ENCODE measurements at regions of chr5 and their contacts with region 1.

Region 1: GRCh38 chr5:157354800-157355199 is 88.9 kb downstream of the CYFIP2 start:
- DNase-seq: no peak
- H3K4me3 Mint-ChIP-seq: no peak overlapping the region
- H3K27ac Mint-ChIP-seq: no peak overlapping the region
- H3K4me1 Mint-ChIP-seq: peaks cover 53% of the 10 kb centered on the region
- H3K27me3 Mint-ChIP-seq: no peaks in the 10 kb centered on the region

Region 2: DNA sequence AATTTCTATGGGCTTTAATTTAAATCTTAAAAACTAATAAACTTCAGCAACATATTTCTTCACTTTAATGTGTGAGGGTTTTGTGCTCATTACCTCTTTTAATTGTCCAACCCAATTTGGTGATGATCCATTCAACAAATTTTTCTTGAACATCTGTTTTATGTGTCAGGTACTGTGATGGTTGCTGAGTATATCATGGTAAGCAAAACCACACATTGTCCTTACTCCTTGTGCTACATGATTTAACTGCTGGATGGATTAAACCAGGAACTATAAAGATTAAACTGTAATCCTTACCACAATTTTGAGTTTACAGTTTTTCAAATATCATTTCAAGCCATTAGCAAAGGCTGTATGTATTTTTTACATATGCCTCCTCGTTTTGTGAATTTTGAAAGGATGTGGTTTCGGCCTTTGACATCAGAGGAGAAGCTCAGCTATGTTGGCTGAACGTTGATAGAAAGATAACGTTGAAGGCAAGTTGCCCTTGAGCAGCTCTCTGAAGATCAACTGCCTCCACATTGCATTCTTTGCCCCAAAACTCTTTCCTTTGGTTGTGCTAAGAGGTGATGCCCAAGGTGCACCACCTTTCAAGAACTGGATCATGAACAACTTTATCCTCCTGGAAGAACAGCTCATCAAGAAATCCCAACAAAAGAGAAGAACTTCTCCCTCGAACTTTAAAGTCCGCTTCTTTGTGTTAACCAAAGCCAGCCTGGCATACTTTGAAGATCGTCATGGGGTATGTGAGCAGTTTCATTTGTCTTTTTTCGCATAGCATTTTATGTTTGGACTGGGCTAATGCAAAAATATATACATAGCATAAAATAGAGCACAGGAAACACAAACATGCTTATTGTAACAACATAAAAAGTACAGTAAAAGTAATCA is 174.2 kb before region 1 on chr5 and contains the start of gene ITK:
- CTCF ChIA-PET with region 1: no interaction called
- POLR2A ChIA-PET with region 1: no interaction called
- intact Hi-C with region 1: loop called (anchors 5 kb)
- DNase-seq: peak; percentile 58
- H3K4me3 Mint-ChIP-seq: peak within 1 kb of the TSS; percentile 99
- H3K27ac Mint-ChIP-seq: peak within 1 kb of the TSS; percentile 100
- H3K4me1 Mint-ChIP-seq: peaks cover 45% of the 10 kb centered on the region
- H3K27me3 Mint-ChIP-seq: no peaks in the 10 kb centered on the region
- total RNA-seq, gene ITK: 236 to 240 TPM

Region 3: GRCh38 chr5:157328277-157328912 is 26.4 kb before region 1 on chr5:
- CTCF ChIA-PET with region 1: interaction called, 12 read pairs
- POLR2A ChIA-PET with region 1: no interaction called
- intact Hi-C with region 1: no loop called
- DNase-seq: peak; percentile 71
- H3K4me3 Mint-ChIP-seq: no peak overlapping the region
- H3K27ac Mint-ChIP-seq: peak overlapping the region; percentile 23
- H3K4me1 Mint-ChIP-seq: peaks cover 40% of the 10 kb centered on the region
- H3K27me3 Mint-ChIP-seq: no peaks in the 10 kb centered on the region

Region 4: DNA sequence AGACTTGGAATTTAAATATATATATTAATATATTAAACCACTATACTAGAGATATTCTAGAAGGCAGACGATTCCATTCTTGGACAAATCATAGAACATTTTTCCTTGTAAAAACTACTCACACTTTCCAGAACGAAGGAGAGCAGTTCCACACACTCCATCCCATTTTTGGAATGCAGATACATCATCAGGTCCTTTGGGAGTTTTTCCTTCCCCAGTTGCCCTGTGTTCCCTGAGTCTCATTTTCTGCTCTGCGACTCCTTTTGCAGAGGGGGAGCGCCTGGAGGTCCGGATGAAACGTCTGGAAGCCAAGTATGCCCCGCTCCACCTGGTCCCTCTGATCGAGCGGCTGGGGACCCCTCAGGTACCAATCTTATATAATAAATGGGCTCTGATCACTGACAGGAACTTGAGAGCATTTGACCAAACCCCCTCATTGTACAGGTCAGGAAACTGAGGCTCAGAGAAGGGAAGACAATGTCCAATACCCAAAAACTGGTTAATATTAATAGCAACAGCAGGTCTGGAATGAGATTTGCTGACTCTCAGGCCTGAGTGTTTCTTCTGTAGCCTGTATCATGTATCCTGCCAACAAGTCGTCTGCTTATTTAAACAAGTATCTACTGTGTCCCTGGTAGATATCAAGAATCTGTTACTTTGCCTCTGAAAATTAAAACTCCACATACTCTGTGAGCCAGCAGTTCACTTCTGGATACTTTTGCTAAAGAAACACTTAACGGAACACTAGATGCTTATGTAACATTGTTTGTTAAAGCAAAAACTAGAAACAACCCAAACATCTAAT is 28.4 kb after region 1 on chr5:
- CTCF ChIA-PET with region 1: no interaction called
- POLR2A ChIA-PET with region 1: no interaction called
- intact Hi-C with region 1: no loop called
- DNase-seq: no peak
- H3K4me3 Mint-ChIP-seq: no peak overlapping the region
- H3K27ac Mint-ChIP-seq: no peak overlapping the region
- H3K4me1 Mint-ChIP-seq: peaks cover 13% of the 10 kb centered on the region
- H3K27me3 Mint-ChIP-seq: no peaks in the 10 kb centered on the region

Region 5: DNA sequence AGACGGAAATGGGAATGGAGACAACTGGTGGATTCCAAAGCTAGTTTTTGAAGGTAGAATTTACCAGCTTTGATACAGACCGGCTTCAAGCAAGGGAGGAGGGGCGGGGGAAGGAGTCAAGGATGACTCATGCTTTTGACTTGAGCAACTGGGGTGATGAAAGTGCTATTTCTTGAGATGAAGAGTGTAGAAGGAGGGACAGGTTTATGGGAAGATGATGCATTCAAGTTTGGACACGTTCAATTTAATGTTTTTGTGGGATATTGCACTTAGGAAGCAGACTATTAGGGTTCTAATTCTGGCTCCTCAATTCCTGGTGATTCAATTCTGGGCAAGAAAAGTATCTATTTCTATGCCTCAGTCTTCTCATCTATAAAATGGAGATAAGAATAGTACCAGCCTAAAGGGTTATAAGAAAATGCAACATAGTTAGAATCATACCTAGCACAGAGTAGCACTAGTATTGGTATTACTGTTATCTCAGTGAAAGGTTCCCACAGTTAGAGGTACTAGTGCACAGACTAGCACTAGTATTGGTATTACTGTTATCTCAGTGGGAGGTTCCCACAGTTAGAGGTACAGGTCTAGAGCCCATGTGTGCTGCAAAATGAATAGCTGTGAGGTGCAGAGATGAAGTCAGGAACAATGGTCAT is 109.8 kb after region 1 on chr5:
- CTCF ChIA-PET with region 1: interaction called, 8 read pairs
- POLR2A ChIA-PET with region 1: interaction called, 4 read pairs
- intact Hi-C with region 1: loop called (anchors 1 kb)
- DNase-seq: peak; percentile 86
- H3K4me3 Mint-ChIP-seq: peak overlapping the region; percentile 2
- H3K27ac Mint-ChIP-seq: peak overlapping the region; percentile 90
- H3K4me1 Mint-ChIP-seq: peaks cover 34% of the 10 kb centered on the region
- H3K27me3 Mint-ChIP-seq: peaks cover 15% of the 10 kb centered on the region

Region 6: DNA sequence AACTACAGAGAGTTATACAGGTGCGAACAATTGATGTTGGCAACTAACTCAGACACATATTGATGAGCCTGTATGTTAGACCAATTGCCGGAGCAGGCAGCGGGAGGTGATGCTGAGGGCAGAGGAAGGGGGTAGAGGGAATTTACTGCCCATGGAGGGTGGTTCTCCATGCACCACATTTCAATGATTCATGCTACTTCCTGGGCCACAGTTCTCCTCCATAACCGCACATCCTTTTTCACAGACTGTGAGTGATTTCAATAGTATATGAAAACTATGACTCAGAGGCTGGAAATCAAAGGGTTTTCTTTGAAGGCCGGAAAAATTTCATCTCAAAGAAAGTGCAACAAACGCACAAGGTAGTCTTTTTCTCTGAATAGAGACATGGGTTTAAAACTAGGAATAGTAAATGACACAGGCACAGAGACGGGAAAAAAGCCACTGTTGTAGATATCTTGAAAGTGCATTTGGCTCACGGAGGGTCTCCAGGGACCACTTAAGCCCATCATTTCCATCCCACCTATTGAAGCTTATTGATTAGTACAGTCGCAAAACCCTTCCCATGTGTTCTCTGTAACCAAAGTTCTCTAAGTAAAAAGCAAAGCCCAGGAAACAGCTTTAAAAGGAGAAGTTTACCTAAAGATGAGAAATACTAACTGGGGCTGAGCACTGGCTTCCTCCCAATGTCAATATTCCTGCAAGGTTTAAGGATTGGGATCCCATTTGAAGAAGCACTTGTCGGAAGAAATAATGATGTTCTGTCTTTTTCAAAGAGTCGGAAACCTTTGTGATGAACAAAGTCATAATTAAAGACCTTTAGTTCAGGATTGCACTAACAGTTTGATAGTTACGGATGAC is 248.8 kb after region 1 on chr5:
- CTCF ChIA-PET with region 1: no interaction called
- POLR2A ChIA-PET with region 1: no interaction called
- intact Hi-C with region 1: loop called (anchors 1 kb)
- DNase-seq: peak; percentile 83
- H3K4me3 Mint-ChIP-seq: peak overlapping the region; percentile 18
- H3K27ac Mint-ChIP-seq: peak overlapping the region; percentile 90
- H3K4me1 Mint-ChIP-seq: peaks cover 93% of the 10 kb centered on the region
- H3K27me3 Mint-ChIP-seq: no peaks in the 10 kb centered on the region